Sigmoid colon (tissue), 7 donors: ENCODE measurements at regions of chr6 and their contacts with region 1.

Region 1: GRCh38 chr6:18122124-18123093 is at the start of gene NHLRC1:
- DNase-seq: peak; percentile 95
- H3K4me3 ChIP-seq: peak within 1 kb of the TSS; percentile 44 to 61 (median 52)
- H3K27ac ChIP-seq: peak within 1 kb of the TSS; percentile 42 to 62 (median 52)
- H3K4me1 ChIP-seq: peaks cover 0 to 13% (median 10%) of the 10 kb centered on the region in 4 donors
- H3K27me3 ChIP-seq: no peaks in the 10 kb centered on the region
- CTCF ChIP-seq: peak; percentile 85 to 97 (median 94)
- EP300 ChIP-seq: no peak
- POLR2A ChIP-seq: peak in 1 of 2 donors; percentile 25
- total RNA-seq, gene NHLRC1: 1.2 to 1.9 (median 1.5) TPM

Region 2: GRCh38 chr6:17808609-17809008 is 313.8 kb before region 1 on chr6:
- intact Hi-C with region 1: loop called (anchors 5 kb)
- DNase-seq: no peak
- H3K4me3 ChIP-seq: no peak overlapping the region
- H3K27ac ChIP-seq: no peak overlapping the region
- H3K4me1 ChIP-seq: no peaks in the 10 kb centered on the region
- H3K27me3 ChIP-seq: no peaks in the 10 kb centered on the region
- CTCF ChIP-seq: no peak
- EP300 ChIP-seq: no peak
- POLR2A ChIP-seq: no peak

Region 3: DNA sequence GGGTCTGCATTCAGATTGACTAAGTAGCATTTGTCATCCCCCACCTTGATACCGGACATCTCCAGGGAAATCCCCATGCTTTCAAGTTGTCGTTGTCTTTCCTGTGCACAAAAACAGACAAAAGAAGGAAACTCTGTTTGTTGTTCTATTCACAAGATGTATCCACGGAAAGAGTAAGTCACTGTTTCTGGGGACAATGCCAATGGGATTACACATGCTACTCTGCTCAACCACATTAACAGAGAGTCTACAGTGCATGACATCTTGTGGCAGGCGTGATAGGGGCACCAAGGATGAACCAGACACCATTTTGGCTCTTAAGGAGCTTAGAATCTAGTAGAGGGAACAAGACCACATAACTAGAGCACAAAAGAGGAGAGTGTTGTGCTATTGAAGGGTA is 291.3 kb before region 1 on chr6:
- intact Hi-C with region 1: loop called (anchors 5 kb)
- DNase-seq: no peak
- H3K4me3 ChIP-seq: no peak overlapping the region
- H3K27ac ChIP-seq: peak overlapping the region in 1 of 4 donors; percentile 2
- H3K4me1 ChIP-seq: peaks cover 0 to 6% (median 0%) of the 10 kb centered on the region in 4 donors
- H3K27me3 ChIP-seq: no peaks in the 10 kb centered on the region
- CTCF ChIP-seq: no peak
- EP300 ChIP-seq: no peak
- POLR2A ChIP-seq: no peak

Region 4: DNA sequence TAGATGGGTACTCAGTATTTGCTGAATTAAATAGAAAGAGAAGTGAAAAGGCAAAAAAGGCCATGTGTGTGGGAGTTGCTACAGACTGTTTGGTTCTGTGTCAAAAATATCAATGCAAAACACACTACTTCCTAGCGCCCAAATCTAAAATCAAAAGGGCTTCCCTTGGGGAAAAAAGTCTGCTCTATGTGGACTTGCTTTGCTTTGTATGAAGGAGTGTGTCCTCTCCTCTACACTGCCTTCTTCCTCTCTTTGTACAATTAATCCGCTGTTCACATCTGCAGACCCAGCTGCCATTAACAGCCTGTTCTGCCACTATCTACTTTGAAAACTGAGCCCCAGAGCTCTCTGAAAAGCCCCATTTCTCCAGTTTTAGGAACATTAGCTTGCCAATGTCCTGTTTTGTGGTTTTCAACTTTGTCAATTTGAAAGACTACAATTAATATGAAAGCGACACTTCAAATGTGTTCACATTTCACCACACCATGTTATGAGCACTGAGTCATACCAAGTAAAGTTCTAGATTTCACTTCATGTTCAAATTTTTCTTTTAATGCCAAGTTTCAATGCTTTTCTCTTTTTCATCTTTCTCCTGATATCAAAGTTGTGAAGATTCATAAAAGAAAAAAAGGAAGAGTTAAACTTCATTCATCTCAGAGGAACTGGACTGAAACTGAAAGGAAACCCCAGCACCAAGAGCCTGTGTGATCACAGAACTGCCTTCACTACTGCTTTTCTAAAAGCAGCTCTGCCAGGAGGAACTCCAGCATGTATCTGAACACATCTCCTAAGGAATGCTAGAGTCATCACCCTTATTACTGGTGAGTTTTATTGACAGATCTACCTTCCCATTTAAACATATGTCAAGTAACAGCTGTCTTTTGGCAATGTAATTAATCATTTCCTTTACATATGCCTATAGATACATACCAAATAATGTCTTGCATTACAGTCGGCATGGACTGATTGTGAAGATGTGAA is 237.6 kb before region 1 on chr6:
- intact Hi-C with region 1: no loop called
- DNase-seq: no peak
- H3K4me3 ChIP-seq: no peak overlapping the region
- H3K27ac ChIP-seq: peak overlapping the region in 1 of 4 donors; percentile 30
- H3K4me1 ChIP-seq: peaks cover 0 to 33% (median 26%) of the 10 kb centered on the region in 4 donors
- H3K27me3 ChIP-seq: no peaks in the 10 kb centered on the region
- CTCF ChIP-seq: no peak
- EP300 ChIP-seq: no peak
- POLR2A ChIP-seq: no peak